Esophagus muscularis mucosa (tissue), 4 donors: ENCODE measurements at regions of chr5 and their contacts with region 1.

Region 1: DNA sequence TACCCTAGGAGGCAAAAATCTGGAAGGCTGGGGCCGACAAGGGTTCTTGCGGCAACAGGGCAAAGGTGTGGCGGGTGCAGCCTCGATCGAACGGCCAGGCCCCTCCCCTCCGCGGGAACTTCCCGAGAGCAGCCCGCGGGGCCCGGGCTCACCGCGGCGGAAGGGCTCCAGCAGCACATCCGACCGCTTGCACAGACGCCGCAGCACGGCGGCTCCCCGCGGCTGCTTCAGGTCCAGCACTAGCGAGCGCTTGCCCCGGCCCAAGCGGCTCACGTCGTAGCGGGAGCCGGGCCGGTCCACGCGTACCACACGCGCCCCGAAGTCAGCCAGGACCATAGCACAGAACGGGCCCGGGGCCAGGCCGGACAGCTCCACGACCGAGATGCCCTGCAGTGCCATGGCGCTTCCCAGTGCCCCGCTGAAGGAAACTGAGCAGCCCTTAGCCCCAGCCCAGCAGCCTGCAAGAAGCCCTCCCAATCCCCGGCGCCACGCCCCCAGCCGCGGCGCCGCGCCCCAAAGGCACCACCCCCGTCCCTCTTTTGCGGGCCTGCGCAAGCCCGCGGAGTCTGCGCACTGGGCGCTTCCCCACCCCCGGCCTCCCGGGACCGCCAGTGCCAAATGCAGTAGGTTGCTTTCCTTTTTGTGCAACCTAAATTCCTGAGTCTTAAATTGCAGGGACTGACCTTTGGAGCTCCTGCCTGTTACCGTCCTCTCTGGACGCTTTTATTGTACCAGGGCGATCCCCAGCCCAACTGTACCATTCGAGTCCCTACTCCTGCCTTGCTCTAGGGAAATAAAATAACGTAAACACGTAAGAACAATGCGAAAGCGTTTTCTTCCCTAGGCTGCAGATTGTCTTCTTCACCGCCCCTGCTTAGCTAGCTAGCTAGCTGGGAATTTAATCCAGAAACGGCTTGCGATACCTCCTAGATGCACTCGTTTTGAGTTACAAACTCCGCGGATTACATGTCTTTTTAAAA is at the start of gene AMACR:
- DNase-seq: peak; percentile 98
- H3K4me3 ChIP-seq: peak within 1 kb of the TSS; percentile 69 to 85 (median 70)
- H3K27ac ChIP-seq: peak within 1 kb of the TSS; percentile 89 to 95 (median 91)
- H3K4me1 ChIP-seq: peaks cover 16 to 31% (median 27%) of the 10 kb centered on the region in 4 donors
- H3K27me3 ChIP-seq: no peaks in the 10 kb centered on the region
- CTCF ChIP-seq: peak in 1 of 3 experiments; percentile 6
- EP300 ChIP-seq: no peak
- POLR2A ChIP-seq: peak; percentile 29
- total RNA-seq, gene AMACR: 6.1 to 12.7 (median 9.5) TPM

Region 2: DNA sequence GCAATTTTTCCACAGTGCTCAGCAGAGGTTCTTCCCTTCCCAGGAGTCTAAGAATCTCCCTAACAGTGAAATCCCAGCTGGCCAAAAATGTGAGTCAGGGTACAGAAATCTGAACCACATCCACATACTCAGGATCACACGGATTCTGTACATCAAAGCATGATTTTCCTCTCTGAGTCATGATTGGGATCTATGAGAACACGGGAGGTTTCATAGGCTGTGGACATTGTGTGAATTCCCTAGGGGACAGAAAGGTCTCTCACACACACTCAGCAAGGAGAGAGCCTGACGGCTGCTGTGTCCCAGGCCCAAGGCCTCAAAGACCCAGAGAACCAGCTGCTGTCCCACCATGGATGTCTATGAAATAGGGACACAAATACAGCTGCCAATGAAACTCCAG is 219.0 kb before region 1 on chr5:
- intact Hi-C with region 1: no loop called
- DNase-seq: no peak
- H3K4me3 ChIP-seq: no peak overlapping the region
- H3K27ac ChIP-seq: no peak overlapping the region
- H3K4me1 ChIP-seq: no peaks in the 10 kb centered on the region
- H3K27me3 ChIP-seq: no peaks in the 10 kb centered on the region
- CTCF ChIP-seq: no peak
- EP300 ChIP-seq: no peak
- POLR2A ChIP-seq: no peak

Region 3: GRCh38 chr5:34929150-34929719 is 921.3 kb after region 1 on chr5 and contains the start of gene DNAJC21:
- intact Hi-C with region 1: loop called (anchors 10 kb)
- DNase-seq: peak; percentile 99
- H3K4me3 ChIP-seq: peak within 1 kb of the TSS; percentile 87 to 97 (median 94)
- H3K27ac ChIP-seq: peak within 1 kb of the TSS; percentile 96 to 98 (median 98)
- H3K4me1 ChIP-seq: peaks cover 20 to 36% (median 31%) of the 10 kb centered on the region in 4 donors
- H3K27me3 ChIP-seq: no peaks in the 10 kb centered on the region
- CTCF ChIP-seq: no peak
- EP300 ChIP-seq: no peak
- POLR2A ChIP-seq: no peak
- total RNA-seq, gene DNAJC21: 54.5 to 85.6 (median 61.5) TPM